PC-9 (cell line): ENCODE measurements at regions of chr19 and their contacts with region 1.

Region 1: GRCh38 chr19:33176670-33177416 is 17.3 kb upstream of the LRP3 start:
- DNase-seq: peak; percentile 94 to 98
- H3K4me3 ChIP-seq: peak overlapping the region; percentile 86
- H3K27ac ChIP-seq: peak overlapping the region; percentile 60
- H3K4me1 ChIP-seq: peaks cover 32% of the 10 kb centered on the region
- H3K27me3 ChIP-seq: no peaks in the 10 kb centered on the region
- CTCF ChIP-seq: peak; percentile 3; the same call in 1 of the 2 replicates

Region 2: GRCh38 chr19:32580901-32581703 is 595.7 kb before region 1 on chr19 and contains the start of gene PDCD5:
- CTCF ChIA-PET with region 1: no interaction called
- POLR2A ChIA-PET with region 1: no interaction called
- intact Hi-C with region 1: loop called (anchors 5 kb)
- DNase-seq: peak; percentile 77 to 95
- H3K4me3 ChIP-seq: peak within 1 kb of the TSS; percentile 73
- H3K27ac ChIP-seq: peak within 1 kb of the TSS; percentile 51
- H3K4me1 ChIP-seq: peaks cover 11% of the 10 kb centered on the region
- H3K27me3 ChIP-seq: no peaks in the 10 kb centered on the region
- CTCF ChIP-seq: no peak
- total RNA-seq, gene PDCD5: 84.4 and 127 TPM in 2 replicates

Region 3: GRCh38 chr19:32691291-32691951 is 485.4 kb before region 1 on chr19 and contains the start of gene NUDT19:
- CTCF ChIA-PET with region 1: no interaction called
- POLR2A ChIA-PET with region 1: no interaction called
- intact Hi-C with region 1: loop called (anchors 10 kb)
- DNase-seq: peak; percentile 75 to 90
- H3K4me3 ChIP-seq: peak within 1 kb of the TSS; percentile 85
- H3K27ac ChIP-seq: peak within 1 kb of the TSS; percentile 68; the same call in 1 of the 2 replicates
- H3K4me1 ChIP-seq: peaks cover 35% of the 10 kb centered on the region
- H3K27me3 ChIP-seq: no peaks in the 10 kb centered on the region
- CTCF ChIP-seq: no peak
- total RNA-seq, gene NUDT19: 21.3 and 26.7 TPM in 2 replicates

Region 4: DNA sequence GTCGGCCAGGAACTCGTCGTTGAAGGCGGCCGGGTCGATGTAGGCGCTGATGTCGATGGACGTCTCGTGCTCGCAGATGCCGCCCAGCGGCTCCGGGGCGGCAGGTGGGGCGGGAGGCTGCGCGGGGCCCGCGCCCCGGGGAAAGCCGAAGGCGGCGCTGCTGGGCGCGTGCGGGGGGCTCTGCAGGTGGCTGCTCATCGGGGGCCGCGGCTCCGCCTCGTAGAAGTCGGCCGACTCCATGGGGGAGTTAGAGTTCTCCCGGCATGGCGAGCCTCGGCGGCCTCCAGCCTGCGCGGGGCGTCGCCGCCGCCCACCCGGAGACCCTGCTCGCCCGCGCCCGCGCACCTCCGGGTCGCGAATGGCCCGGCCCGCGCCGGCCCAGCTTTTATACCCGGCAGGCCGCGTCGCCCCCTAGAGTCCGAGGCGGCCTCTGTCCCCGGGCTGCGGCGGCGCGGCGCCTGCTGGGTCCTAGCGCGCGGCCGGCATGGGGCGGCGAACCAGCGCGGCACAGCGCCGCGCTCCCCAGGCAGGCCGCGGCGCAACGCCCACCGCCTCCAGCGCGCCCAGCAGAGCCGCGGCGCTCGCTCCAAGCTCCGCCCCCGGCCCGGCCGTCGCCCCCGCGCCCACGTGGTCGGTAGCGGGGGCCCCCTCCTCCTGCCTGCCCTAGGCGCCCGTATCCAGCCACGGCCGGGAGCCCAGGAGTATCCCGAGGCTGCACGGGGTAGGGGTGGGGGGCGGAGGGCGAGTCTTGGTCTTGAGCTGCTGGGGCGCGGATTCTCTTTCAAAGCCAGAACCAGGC is 125.5 kb after region 1 on chr19 and contains the start of gene CEBPA:
- CTCF ChIA-PET with region 1: interaction called, 11 read pairs
- POLR2A ChIA-PET with region 1: interaction called, 6 read pairs
- intact Hi-C with region 1: loop called (anchors 10 kb)
- DNase-seq: peak; percentile 64 to 90
- H3K4me3 ChIP-seq: peak within 1 kb of the TSS; percentile 91
- H3K27ac ChIP-seq: no peak within 1 kb of the TSS
- H3K4me1 ChIP-seq: peaks cover 35% of the 10 kb centered on the region
- H3K27me3 ChIP-seq: no peaks in the 10 kb centered on the region
- CTCF ChIP-seq: no peak
- total RNA-seq, gene CEBPA: 8.9 and 9.2 TPM in 2 replicates